ENCODE measurements at regions of chrX and their contacts with region 1.

Region 1: DNA sequence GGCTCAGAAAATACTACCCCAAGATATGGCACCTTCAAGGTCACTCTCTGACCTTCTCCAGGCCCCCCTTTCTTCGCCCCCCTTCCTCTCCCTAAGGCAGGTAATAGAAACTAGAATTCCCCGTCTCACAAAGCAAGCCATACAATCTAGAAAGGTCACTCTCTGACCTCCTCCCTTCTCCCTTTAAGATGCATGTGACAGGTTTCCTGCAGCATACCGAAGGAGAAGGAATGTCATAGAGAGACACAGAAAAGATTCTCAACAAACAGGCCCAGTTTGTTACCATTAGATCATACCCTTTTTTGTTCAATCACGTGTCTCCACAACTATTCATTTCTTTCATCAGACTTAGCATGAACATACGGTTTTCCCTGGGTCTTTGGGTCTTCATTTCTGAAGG is 51.2 kb upstream of the RBMXL3 start:
- DNase-seq: no peak
- ATAC-seq: no peak
- H3K4me3 ChIP-seq: no peak overlapping the region
- H3K27ac ChIP-seq: no peak overlapping the region
- H3K4me1 ChIP-seq: no peaks in the 10 kb centered on the region
- H3K27me3 ChIP-seq: peaks cover 0 to 11% (median 0%) of the 10 kb centered on the region in 3 donors
- CTCF ChIP-seq: no peak

Region 2: DNA sequence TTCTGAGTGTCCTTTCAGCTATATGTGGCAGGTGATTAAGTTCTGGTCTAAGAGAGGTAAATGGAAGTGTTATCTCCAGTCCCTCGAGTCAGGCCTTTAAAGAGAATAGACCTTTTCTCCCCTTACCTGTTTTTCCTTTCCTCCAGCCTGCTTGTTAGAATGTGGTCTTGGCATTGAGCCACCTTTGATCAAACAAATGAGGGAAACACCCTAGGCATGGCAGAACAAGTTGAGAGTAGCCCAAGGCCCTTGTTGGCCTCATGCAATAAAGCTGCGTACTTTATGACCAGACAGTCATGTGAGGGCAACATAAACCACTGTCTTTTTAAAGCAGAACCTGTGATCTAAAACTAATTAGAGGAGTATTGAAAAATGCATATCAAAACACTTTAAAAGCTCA is 107.4 kb before region 1 on chrX:
- intact Hi-C with region 1: no loop called
- DNase-seq: no peak
- ATAC-seq: no peak
- H3K4me3 ChIP-seq: no peak overlapping the region
- H3K27ac ChIP-seq: no peak overlapping the region
- H3K4me1 ChIP-seq: no peaks in the 10 kb centered on the region
- H3K27me3 ChIP-seq: peaks cover 0 to 31% (median 0%) of the 10 kb centered on the region in 3 donors
- CTCF ChIP-seq: no peak

Region 3: GRCh38 chrX:115067812-115068211 is 70.2 kb before region 1 on chrX:
- intact Hi-C with region 1: loop called in 1 of 2 experiments (anchors 5 kb)
- DNase-seq: no peak
- ATAC-seq: no peak
- H3K4me3 ChIP-seq: no peak overlapping the region
- H3K27ac ChIP-seq: no peak overlapping the region
- H3K4me1 ChIP-seq: no peaks in the 10 kb centered on the region
- H3K27me3 ChIP-seq: peaks cover 0 to 10% (median 0%) of the 10 kb centered on the region in 3 donors
- CTCF ChIP-seq: no peak

Measured in psoas muscle (tissue), 8 donors.